Posterior vena cava (tissue), 2 donors: ENCODE measurements at regions of chr11 and their contacts with region 1.

Region 1: DNA sequence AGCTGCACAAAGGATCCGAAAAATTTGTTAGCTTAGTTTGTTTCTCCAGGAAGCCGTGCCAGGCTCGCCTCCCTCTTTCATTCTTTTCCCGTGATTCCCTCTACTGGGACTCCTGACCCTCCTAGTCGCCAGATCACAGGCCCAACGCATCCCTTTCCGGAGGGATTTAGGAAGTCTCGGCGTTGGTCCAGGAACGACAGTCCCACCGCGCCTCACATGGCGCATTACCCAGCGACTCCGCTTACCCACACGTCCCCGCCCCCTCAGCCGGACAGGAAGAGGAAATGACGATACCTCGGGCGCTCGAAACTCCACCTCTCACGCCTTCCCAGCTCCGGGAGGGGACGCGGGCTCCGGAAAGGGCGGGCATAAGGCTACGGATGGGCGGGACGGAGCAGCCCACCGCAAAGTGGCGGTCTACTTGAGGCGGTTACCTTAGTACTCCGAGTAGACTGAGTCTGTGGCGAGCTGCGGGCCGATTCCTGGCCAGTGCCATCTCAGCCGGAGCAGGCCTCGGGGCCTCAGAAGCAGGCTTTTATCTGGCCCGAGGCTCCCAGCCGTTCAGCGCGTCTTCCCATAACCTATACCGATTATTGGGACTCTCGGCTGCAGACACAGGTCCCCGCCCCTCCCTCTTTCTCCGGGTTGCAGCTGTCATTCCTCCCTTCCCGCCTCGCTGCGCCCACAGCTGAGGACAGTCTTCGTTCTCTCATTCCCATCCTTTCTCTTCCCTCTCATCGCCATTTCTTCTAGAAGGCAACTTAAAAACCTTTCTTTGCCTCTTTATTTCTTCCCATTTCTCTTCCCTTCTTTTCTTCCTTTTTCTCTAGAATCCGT is at the start of gene CCDC15:
- DNase-seq: peak; percentile 99
- total RNA-seq, gene CCDC15: 1.1 to 1.6 TPM

Region 2: GRCh38 chr11:125404776-125405435 is 450.9 kb after region 1 on chr11:
- intact Hi-C with region 1: loop called in 1 of 2 experiments (anchors 10 kb)
- DNase-seq: peak; percentile 90